ENCODE measurements at regions of chr14 and their contacts with region 1.

Region 1: DNA sequence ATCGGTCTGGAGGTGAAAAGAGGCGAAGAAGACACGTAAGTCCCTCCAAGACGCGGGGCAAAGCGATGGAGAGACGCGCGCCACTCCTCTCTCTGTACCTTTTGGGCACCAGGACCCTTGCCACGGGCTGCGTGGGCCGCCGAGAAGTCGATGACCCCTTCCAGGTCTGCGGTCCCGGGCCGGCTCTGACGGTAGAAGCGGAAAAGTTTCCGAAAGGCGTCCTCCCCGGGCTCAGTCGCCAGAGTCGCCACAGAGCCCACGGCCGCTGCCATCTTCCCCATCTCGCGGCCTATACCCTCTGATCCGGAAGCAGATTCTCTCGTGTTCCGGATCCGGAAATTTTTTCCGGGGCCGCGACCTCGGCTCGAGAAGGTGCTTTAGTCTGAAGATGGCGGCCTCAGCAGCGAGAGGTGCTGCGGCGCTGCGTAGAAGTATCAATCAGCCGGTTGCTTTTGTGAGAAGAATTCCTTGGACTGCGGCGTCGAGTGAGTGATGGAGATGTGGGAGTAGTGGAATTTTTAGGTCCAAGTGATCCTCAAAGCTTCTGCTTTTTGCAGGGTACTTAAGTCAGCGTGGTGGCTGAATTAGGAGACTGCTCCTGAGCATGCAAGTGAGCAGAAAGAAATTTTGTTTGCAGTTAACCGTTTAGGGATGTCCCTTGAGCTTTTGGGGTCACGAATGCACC is at the starts of genes ALKBH1 and SLIRP:
- DNase-seq: peak; percentile 72 to 92 (median 86)
- ATAC-seq: peak; percentile 98 to 99 (median 98)
- H3K4me3 ChIP-seq: peak within 1 kb of the TSS; percentile 80 to 100
- H3K4me3 Mint-ChIP-seq: peak within 1 kb of the TSS; percentile 90 to 97 (median 96)
- H3K27ac ChIP-seq: peak within 1 kb of the TSS; percentile 19
- H3K27ac Mint-ChIP-seq: peak within 1 kb of the TSS; percentile 90 to 95
- H3K4me1 ChIP-seq: peaks cover 16 to 29% of the 10 kb centered on the region in 2 experiments
- H3K4me1 Mint-ChIP-seq: peaks cover 34 to 46% (median 45%) of the 10 kb centered on the region in 3 donors
- H3K27me3 ChIP-seq: no peaks in the 10 kb centered on the region
- H3K27me3 Mint-ChIP-seq: no peaks in the 10 kb centered on the region
- total RNA-seq, gene ALKBH1: 9.1 to 20.2 (median 17.9) TPM
- total RNA-seq, gene SLIRP: 32.2 to 45.8 (median 40.3) TPM

Region 2: DNA sequence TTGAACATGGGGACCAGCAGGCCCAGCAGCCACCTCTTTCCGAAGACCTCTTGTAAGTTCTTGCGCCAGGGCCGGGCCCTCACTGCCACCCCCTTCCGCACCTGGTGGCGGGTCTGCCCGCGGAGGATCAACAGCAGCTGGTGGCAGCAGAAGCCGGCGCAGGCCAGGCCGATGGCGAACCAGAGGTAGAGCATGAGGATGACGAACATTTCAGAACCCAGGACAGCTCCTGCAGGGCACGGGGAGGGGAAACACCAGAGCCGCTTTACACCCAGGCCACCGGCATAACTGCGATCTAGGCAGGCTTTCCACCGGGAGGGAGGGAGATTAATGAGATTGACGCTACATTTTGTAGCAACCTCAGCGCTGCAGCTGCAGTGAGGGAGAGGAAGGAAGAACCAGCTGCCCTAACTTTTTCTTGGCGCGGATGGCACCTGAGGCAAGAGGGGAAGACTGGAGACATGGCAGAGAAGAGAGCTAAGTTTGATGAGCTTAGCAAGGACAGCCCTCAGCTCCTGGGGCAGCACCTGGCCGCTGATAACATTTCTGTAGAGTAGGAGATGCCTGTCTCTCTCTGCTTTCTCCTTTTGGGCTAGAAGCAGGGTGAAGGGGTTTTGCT is 574.0 kb before region 1 on chr14:
- CTCF ChIA-PET with region 1: no interaction called
- POLR2A ChIA-PET with region 1: interaction called in 1 of 2 experiments, 12 read pairs
- DNase-seq: peak in 32 of 35 experiments; percentile 17 to 73 (median 46)
- ATAC-seq: peak; percentile 43 to 86 (median 64)
- H3K4me3 ChIP-seq: no peak overlapping the region
- H3K4me3 Mint-ChIP-seq: no peak overlapping the region
- H3K27ac ChIP-seq: no peak overlapping the region
- H3K27ac Mint-ChIP-seq: no peak overlapping the region
- H3K4me1 ChIP-seq: peaks cover 0 to 2% of the 10 kb centered on the region in 2 experiments
- H3K4me1 Mint-ChIP-seq: peaks cover 3 to 18% (median 4%) of the 10 kb centered on the region in 3 donors
- H3K27me3 ChIP-seq: peaks cover 4 to 74% of the 10 kb centered on the region in 2 experiments
- H3K27me3 Mint-ChIP-seq: peaks cover 61 to 89% of the 10 kb centered on the region in 2 donors

Region 3: DNA sequence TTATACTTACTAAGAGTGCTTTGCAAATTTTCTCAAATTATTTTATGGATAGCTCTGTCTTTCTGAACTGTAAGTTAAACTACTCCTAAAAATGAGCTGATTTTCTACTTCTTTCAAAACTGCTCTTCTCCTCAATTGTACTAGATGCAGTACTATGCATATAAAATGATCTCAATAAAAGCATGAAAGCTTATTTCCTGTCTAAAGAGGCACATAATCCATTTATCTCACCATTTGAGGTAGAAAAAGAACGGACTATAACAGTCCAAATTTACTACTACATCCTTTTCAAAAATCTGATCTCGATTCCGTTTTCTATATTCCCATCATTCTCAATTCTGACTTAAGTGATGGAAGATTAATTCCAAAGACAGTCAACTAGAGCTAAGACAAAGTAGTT is 14.4 kb after region 1 on chr14:
- CTCF ChIA-PET with region 1: interaction called in 1 of 2 experiments, 4 read pairs
- POLR2A ChIA-PET with region 1: interaction called in 1 of 2 experiments, 10 read pairs
- DNase-seq: no peak
- ATAC-seq: no peak
- H3K4me3 ChIP-seq: no peak overlapping the region
- H3K4me3 Mint-ChIP-seq: no peak overlapping the region
- H3K27ac ChIP-seq: no peak overlapping the region
- H3K27ac Mint-ChIP-seq: no peak overlapping the region
- H3K4me1 ChIP-seq: no peaks in the 10 kb centered on the region
- H3K4me1 Mint-ChIP-seq: peaks cover 0 to 5% (median 0%) of the 10 kb centered on the region in 3 donors
- H3K27me3 ChIP-seq: no peaks in the 10 kb centered on the region
- H3K27me3 Mint-ChIP-seq: no peaks in the 10 kb centered on the region

Measured in T-cell (primary cell).